CD8-positive, alpha-beta T cell (primary cell): ENCODE measurements at regions of chr12 and their contacts with region 1.

Region 1: GRCh38 chr12:130961921-130962451 is 8.3 kb downstream of the ADGRD1 start:
- DNase-seq: no peak
- ATAC-seq: no peak
- H3K4me3 ChIP-seq: no peak overlapping the region
- H3K4me3 Mint-ChIP-seq: no peak overlapping the region
- H3K27ac ChIP-seq: no peak overlapping the region
- H3K27ac Mint-ChIP-seq: no peak overlapping the region
- H3K4me1 ChIP-seq: no peaks in the 10 kb centered on the region
- H3K4me1 Mint-ChIP-seq: no peaks in the 10 kb centered on the region
- H3K27me3 ChIP-seq: no peaks in the 10 kb centered on the region
- H3K27me3 Mint-ChIP-seq: peaks cover 5% of the 10 kb centered on the region
- CTCF ChIP-seq: no peak

Region 2: DNA sequence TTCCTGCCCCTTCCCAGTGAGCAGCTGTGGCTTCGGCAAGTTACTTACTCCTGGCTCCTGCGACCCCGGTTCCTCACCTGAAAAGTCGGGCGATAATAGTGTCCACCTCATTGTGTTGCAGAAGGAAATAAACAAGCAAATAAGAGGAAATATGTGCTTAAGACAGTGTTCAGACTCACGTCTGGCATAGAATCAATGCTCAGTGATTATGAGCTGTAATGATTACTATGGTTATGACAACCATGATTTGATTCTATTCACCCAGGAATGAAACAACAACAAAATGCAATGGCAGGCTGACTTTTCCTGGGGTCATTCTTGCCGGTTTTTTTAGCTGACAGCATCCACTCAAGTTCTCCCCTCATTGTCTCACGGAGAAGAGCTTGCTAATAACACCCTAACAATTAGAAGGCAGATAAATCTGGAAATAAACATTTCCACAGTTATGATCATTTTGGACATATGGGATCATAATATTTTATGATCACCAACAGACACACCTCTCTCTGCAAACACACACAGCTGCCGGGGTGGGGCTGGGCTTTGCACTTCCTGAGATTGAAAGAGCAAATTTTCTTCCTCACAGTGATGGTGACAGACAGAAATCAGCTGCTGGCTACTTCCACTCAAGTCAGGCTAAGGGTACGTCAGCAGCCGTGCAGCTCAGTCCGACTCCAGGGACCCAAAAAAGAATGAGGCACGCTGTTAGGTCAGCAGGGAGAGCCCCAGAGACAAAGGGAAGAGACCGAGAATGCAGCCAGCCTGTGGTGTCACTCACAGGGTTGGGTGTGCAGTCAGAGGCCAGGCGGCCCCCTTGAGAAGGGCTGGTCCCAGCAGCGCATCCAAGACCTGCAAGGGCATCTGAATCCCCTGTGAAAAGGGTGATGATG is 403.9 kb before region 1 on chr12:
- CTCF ChIA-PET with region 1: no interaction called
- POLR2A ChIA-PET with region 1: no interaction called
- intact Hi-C with region 1: no loop called
- DNase-seq: no peak
- ATAC-seq: no peak
- H3K4me3 ChIP-seq: no peak overlapping the region
- H3K4me3 Mint-ChIP-seq: no peak overlapping the region
- H3K27ac ChIP-seq: no peak overlapping the region
- H3K27ac Mint-ChIP-seq: no peak overlapping the region
- H3K4me1 ChIP-seq: no peaks in the 10 kb centered on the region
- H3K4me1 Mint-ChIP-seq: no peaks in the 10 kb centered on the region
- H3K27me3 ChIP-seq: no peaks in the 10 kb centered on the region
- H3K27me3 Mint-ChIP-seq: peaks cover 12% of the 10 kb centered on the region
- CTCF ChIP-seq: no peak

Region 3: GRCh38 chr12:131441060-131441396 is 479.0 kb after region 1 on chr12:
- CTCF ChIA-PET with region 1: no interaction called
- POLR2A ChIA-PET with region 1: no interaction called
- intact Hi-C with region 1: loop called in 1 of 2 experiments (anchors 5 kb)
- DNase-seq: peak in 1 of 9 experiments; percentile 2
- ATAC-seq: no peak
- H3K4me3 ChIP-seq: no peak overlapping the region
- H3K4me3 Mint-ChIP-seq: no peak overlapping the region
- H3K27ac ChIP-seq: no peak overlapping the region
- H3K27ac Mint-ChIP-seq: no peak overlapping the region
- H3K4me1 ChIP-seq: no peaks in the 10 kb centered on the region
- H3K4me1 Mint-ChIP-seq: no peaks in the 10 kb centered on the region
- H3K27me3 ChIP-seq: no peaks in the 10 kb centered on the region
- H3K27me3 Mint-ChIP-seq: peaks cover 5% of the 10 kb centered on the region
- CTCF ChIP-seq: no peak